CD8-positive, alpha-beta memory T cell (primary cell): ENCODE measurements at regions of chr2 and their contacts with region 1.

Region 1: GRCh38 chr2:218360447-218360846 is 3.8 kb downstream of the CATIP start:
- DNase-seq: no peak
- H3K4me3 ChIP-seq: no peak overlapping the region
- H3K4me3 Mint-ChIP-seq: no peak overlapping the region
- H3K27ac ChIP-seq: no peak overlapping the region
- H3K27ac Mint-ChIP-seq: no peak overlapping the region
- H3K4me1 ChIP-seq: no peaks in the 10 kb centered on the region
- H3K4me1 Mint-ChIP-seq: peaks cover 0 to 4% (median 2%) of the 10 kb centered on the region in 3 donors
- H3K27me3 ChIP-seq: no peaks in the 10 kb centered on the region
- H3K27me3 Mint-ChIP-seq: no peaks in the 10 kb centered on the region

Region 2: DNA sequence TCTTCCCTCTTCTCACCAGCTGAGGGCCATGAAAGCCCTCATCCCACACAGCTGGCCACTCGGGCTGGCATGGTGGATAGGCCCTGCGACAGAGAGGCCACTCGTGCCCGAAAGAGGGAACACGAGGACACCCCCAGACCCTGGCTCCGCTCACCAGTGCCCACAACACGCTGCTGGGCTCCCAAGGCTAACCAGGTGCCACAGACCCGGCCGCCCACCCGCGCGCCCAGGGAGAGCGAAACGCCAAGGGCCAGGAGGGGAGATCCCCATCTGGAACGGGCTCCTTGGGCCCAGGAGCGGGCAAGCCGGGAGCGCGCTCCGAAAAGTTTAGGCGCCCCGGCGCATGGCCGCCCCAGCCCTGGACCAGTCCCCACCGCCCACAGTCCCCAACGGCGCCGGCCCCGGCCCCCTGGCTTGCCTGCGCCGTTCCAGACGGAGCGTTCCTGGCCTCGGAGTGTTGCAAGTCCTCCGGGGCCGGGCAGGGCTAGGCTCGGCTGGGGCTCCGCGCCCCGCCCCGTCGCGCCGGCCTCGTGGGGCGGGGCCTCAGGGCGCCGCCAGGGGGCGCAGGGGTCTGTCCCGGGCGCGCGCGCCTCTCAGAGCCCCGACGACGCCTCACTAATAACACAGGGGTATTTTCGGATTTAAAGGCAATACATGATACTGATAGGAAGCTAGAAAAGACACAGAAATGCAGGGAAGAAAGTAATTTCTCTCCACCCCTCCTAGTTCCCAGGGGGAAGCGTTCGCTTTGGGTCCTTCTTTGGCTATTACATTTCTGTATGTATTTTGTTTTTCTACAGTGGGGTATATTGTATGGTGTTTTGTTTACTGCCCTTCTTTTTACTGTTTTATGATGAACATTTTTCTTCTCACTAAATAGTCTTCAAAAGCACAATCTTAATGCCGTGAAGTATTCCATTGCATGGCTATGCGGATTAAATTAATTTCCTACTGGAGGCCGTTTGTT is 68.1 kb before region 1 on chr2 and contains the start of gene TMBIM1:
- CTCF ChIA-PET with region 1: interaction called, 32 read pairs
- POLR2A ChIA-PET with region 1: interaction called, 4 read pairs
- DNase-seq: peak; percentile 76 to 84 (median 79)
- H3K4me3 ChIP-seq: peak within 1 kb of the TSS; percentile 83
- H3K4me3 Mint-ChIP-seq: peak within 1 kb of the TSS; percentile 88 to 94 (median 92)
- H3K27ac ChIP-seq: peak within 1 kb of the TSS; percentile 84
- H3K27ac Mint-ChIP-seq: peak within 1 kb of the TSS; percentile 88 to 99 (median 98)
- H3K4me1 ChIP-seq: peaks cover 58% of the 10 kb centered on the region
- H3K4me1 Mint-ChIP-seq: peaks cover 46 to 66% (median 58%) of the 10 kb centered on the region in 3 donors
- H3K27me3 ChIP-seq: no peaks in the 10 kb centered on the region
- H3K27me3 Mint-ChIP-seq: no peaks in the 10 kb centered on the region
- total RNA-seq, gene TMBIM1: 82.3 to 92.3 TPM

Region 3: DNA sequence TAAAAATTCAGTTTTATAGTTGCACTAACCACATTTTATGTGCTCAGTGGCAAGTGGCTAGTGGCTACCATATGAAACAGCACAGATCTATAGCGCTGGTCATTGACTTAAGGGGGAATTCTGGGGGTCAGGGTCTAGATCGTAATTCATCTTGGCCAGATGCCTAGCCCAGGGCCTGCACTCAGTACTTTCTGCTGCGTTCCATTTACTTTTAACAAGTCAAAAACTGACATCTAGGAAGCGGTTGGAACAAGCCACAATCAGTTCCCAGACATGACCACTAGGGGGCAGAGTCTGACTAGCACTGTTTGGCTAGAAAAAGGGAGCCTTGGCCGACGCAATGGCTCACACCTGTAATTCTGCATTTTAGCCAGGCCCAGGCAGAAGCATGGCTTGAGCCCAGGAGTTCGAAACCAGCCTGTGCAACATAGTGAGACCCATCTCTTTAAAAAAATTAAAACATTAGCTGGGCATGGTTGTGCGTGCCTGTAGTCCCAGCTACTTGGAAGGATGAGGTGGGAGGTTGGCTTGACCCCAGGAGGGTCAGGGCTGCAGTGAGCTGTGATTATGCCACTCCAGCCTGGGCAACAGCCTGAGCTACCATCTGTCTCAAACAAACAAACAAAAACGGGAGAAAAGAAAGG is 59.1 kb before region 1 on chr2:
- CTCF ChIA-PET with region 1: interaction called, 50 read pairs
- POLR2A ChIA-PET with region 1: interaction called, 3 read pairs
- DNase-seq: peak; percentile 77 to 91 (median 80)
- H3K4me3 ChIP-seq: no peak overlapping the region
- H3K4me3 Mint-ChIP-seq: peak overlapping the region in 1 of 7 donors; percentile 11
- H3K27ac ChIP-seq: no peak overlapping the region
- H3K27ac Mint-ChIP-seq: peak overlapping the region in 6 of 8 donors; percentile 1 to 70 (median 28)
- H3K4me1 ChIP-seq: peaks cover 6% of the 10 kb centered on the region
- H3K4me1 Mint-ChIP-seq: peaks cover 3 to 8% (median 7%) of the 10 kb centered on the region in 3 donors
- H3K27me3 ChIP-seq: no peaks in the 10 kb centered on the region
- H3K27me3 Mint-ChIP-seq: no peaks in the 10 kb centered on the region

Region 4: DNA sequence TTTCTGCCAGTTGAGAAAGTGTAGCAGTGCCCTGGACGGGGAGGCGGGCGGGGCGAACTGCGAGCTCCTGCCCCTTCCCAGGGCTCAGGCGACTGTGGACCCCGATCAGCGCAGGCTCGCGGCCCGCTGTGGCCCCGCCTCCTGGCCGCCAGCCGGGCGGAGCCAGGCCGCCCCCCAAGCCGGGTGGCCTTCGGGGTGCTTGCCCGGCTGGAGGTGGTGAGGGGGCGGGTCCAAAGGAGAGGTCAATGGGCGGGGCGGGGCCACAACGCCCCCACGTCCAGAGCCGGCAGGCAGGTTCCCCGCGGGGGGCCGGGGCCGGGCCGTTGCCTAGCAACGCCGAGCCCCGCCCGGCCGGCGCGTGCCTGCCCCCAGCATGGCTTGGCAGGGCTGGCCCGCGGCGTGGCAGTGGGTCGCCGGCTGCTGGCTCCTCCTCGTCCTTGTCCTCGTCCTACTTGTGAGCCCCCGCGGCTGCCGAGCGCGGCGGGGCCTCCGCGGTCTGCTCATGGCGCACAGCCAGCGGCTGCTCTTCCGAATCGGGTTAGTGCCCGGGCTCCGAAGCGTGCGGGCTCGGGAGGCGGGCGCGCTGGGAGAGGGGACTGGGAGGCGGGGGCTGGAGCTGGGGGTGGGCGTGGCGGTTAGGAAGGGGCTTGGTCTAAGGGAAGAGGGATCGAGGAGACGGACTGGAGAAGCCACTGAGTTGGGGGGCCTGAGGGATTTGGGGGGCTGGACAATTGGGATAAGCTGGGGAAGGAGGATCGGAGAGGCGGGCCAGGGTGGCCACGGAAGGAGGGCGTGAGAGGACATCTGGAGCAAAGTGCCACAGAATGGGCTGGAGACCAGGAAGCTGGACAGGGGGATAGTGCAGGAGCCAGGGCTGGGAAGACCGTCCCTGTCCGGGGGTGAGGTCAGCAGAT is 37.3 kb before region 1 on chr2:
- CTCF ChIA-PET with region 1: interaction called, 12 read pairs
- POLR2A ChIA-PET with region 1: no interaction called
- DNase-seq: peak; percentile 34 to 69 (median 48)
- H3K4me3 ChIP-seq: peak overlapping the region; percentile 63
- H3K4me3 Mint-ChIP-seq: peak overlapping the region; percentile 76 to 92 (median 85)
- H3K27ac ChIP-seq: no peak overlapping the region
- H3K27ac Mint-ChIP-seq: peak overlapping the region in 6 of 8 donors; percentile 53 to 85 (median 76)
- H3K4me1 ChIP-seq: peaks cover 27% of the 10 kb centered on the region
- H3K4me1 Mint-ChIP-seq: peaks cover 15 to 26% (median 16%) of the 10 kb centered on the region in 3 donors
- H3K27me3 ChIP-seq: no peaks in the 10 kb centered on the region
- H3K27me3 Mint-ChIP-seq: peaks cover 8 to 11% of the 10 kb centered on the region in 2 donors